Activated CD4-positive, alpha-beta memory T cell treated with anti-CD3 and anti-CD28 coated beads for 36 hours (primary cell): ENCODE measurements at regions of chr3 and their contacts with region 1.

Region 1: DNA sequence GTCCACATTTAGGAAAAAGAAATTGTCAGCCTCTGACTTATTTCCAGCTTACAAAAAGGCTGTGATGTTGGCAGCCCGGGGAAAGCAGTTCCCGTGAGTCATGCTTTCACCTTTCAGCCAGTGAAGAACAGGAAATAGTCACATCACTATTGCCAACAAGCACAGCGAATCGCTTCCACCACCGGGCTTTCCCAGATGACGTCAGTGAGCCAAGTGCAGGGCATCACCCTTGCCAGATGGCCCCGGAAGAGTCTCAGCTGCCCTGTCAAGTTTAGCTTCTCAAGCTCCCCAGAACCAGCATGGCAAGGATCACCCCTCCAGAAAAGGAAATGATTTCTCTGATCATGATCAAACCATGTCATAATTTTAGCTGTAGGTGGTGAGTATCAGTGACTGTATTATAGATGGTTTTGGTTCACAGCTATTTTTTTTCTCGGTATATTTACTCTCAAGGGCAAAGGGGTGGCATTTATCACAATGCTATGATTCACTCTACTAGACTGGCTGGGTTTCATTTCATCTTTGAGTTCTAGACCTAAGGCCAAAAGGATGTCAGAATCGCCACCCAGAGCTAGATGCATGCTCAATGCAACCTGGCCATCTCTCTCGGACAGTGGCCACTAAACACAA is 32.9 kb downstream of the B3GNT5 start:
- DNase-seq: peak; percentile 97
- H3K4me3 Mint-ChIP-seq: peak overlapping the region; percentile 71
- H3K27ac Mint-ChIP-seq: peak overlapping the region; percentile 98
- H3K4me1 Mint-ChIP-seq: peaks cover 39% of the 10 kb centered on the region
- H3K27me3 Mint-ChIP-seq: no peaks in the 10 kb centered on the region

Region 2: GRCh38 chr3:182792901-182793662 is 492.9 kb before region 1 on chr3 and contains the start of gene ATP11B:
- CTCF ChIA-PET with region 1: no interaction called
- POLR2A ChIA-PET with region 1: no interaction called
- intact Hi-C with region 1: loop called (anchors 5 kb)
- DNase-seq: peak; percentile 82
- H3K4me3 Mint-ChIP-seq: peak within 1 kb of the TSS; percentile 93
- H3K27ac Mint-ChIP-seq: peak within 1 kb of the TSS; percentile 94
- H3K4me1 Mint-ChIP-seq: peaks cover 24% of the 10 kb centered on the region
- H3K27me3 Mint-ChIP-seq: peaks cover 2% of the 10 kb centered on the region
- total RNA-seq, gene ATP11B: 93.9 to 96.0 TPM

Region 3: DNA sequence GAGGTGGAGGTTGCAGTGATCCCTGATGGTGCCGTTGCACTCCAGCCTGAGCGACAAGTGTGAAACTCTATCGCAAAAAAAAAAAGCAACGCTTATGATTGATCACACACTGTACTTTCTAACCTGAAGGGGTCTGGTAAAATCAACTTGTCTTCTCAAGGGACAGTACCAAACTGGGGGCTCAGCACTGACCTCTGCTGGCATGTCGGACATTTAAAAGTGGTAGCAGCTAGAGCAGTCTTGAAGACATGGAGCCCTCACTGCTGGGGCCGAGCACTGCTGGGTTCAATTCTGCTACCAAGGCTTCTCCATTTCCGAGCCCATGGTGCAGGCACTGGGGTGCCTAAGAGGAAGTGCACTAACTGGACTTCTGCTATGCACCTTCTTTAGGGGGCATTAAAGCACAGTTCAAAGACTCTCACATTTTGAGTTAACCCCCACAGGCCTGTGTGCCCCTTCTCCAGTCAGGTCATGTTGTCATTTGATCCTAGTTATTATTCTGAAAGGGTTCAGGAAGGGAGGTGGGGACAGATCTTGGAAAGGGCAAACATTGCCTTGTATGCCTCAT is 97.0 kb before region 1 on chr3:
- CTCF ChIA-PET with region 1: interaction called, 4 read pairs
- POLR2A ChIA-PET with region 1: no interaction called
- intact Hi-C with region 1: loop called (anchors 5 kb)
- DNase-seq: peak; percentile 55
- H3K4me3 Mint-ChIP-seq: no peak overlapping the region
- H3K27ac Mint-ChIP-seq: no peak overlapping the region
- H3K4me1 Mint-ChIP-seq: peaks cover 10% of the 10 kb centered on the region
- H3K27me3 Mint-ChIP-seq: no peaks in the 10 kb centered on the region

Region 4: GRCh38 chr3:183252973-183253901 is 32.7 kb before region 1 on chr3 and contains the start of gene B3GNT5:
- CTCF ChIA-PET with region 1: interaction called, 5 read pairs
- POLR2A ChIA-PET with region 1: interaction called, 6 read pairs
- intact Hi-C with region 1: loop called (anchors 1 kb)
- DNase-seq: peak; percentile 60
- H3K4me3 Mint-ChIP-seq: peak within 1 kb of the TSS; percentile 76
- H3K27ac Mint-ChIP-seq: peak within 1 kb of the TSS; percentile 34
- H3K4me1 Mint-ChIP-seq: peaks cover 12% of the 10 kb centered on the region
- H3K27me3 Mint-ChIP-seq: peaks cover 18% of the 10 kb centered on the region
- total RNA-seq, gene B3GNT5: 12.7 to 12.9 TPM

Region 5: GRCh38 chr3:183375787-183376186 is 89.8 kb after region 1 on chr3:
- CTCF ChIA-PET with region 1: no interaction called
- POLR2A ChIA-PET with region 1: interaction called, 3 read pairs
- intact Hi-C with region 1: loop called (anchors 1 kb)
- DNase-seq: no peak
- H3K4me3 Mint-ChIP-seq: no peak overlapping the region
- H3K27ac Mint-ChIP-seq: no peak overlapping the region
- H3K4me1 Mint-ChIP-seq: peaks cover 28% of the 10 kb centered on the region
- H3K27me3 Mint-ChIP-seq: no peaks in the 10 kb centered on the region

Region 6: GRCh38 chr3:183410280-183410679 is 124.3 kb after region 1 on chr3:
- CTCF ChIA-PET with region 1: no interaction called
- POLR2A ChIA-PET with region 1: no interaction called
- intact Hi-C with region 1: no loop called
- DNase-seq: no peak
- H3K4me3 Mint-ChIP-seq: no peak overlapping the region
- H3K27ac Mint-ChIP-seq: no peak overlapping the region
- H3K4me1 Mint-ChIP-seq: no peaks in the 10 kb centered on the region
- H3K27me3 Mint-ChIP-seq: no peaks in the 10 kb centered on the region

Region 7: GRCh38 chr3:183468424-183468823 is 182.5 kb after region 1 on chr3:
- CTCF ChIA-PET with region 1: no interaction called
- POLR2A ChIA-PET with region 1: no interaction called
- intact Hi-C with region 1: loop called (anchors 2 kb)
- DNase-seq: no peak
- H3K4me3 Mint-ChIP-seq: no peak overlapping the region
- H3K27ac Mint-ChIP-seq: peak overlapping the region; percentile 79
- H3K4me1 Mint-ChIP-seq: peaks cover 20% of the 10 kb centered on the region
- H3K27me3 Mint-ChIP-seq: no peaks in the 10 kb centered on the region

Region 8: DNA sequence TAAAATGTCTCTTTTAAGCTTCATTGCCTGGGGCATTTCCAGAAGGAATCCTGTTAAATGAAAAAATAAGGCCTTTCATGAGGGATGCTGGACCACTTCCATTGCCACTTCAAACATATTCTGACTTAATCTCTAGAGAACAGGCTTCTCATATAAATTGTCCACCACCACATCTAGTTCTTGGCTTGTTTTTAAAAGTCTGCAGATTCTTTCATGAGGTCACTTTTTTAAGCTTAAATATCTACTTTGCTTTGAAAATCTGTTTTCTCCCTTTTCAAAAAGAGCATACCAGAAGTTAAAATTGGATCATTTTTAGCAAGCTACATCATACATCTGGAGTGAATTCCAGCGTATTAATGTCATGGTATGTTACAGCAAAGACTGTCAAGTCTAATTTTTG is 1735.3 kb after region 1 on chr3:
- CTCF ChIA-PET with region 1: no interaction called
- POLR2A ChIA-PET with region 1: no interaction called
- intact Hi-C with region 1: no loop called
- DNase-seq: no peak
- H3K4me3 Mint-ChIP-seq: no peak overlapping the region
- H3K27ac Mint-ChIP-seq: no peak overlapping the region
- H3K4me1 Mint-ChIP-seq: no peaks in the 10 kb centered on the region
- H3K27me3 Mint-ChIP-seq: no peaks in the 10 kb centered on the region